GM10248 (cell line): ENCODE measurements at regions of chr16 and their contacts with region 1.

Region 1: DNA sequence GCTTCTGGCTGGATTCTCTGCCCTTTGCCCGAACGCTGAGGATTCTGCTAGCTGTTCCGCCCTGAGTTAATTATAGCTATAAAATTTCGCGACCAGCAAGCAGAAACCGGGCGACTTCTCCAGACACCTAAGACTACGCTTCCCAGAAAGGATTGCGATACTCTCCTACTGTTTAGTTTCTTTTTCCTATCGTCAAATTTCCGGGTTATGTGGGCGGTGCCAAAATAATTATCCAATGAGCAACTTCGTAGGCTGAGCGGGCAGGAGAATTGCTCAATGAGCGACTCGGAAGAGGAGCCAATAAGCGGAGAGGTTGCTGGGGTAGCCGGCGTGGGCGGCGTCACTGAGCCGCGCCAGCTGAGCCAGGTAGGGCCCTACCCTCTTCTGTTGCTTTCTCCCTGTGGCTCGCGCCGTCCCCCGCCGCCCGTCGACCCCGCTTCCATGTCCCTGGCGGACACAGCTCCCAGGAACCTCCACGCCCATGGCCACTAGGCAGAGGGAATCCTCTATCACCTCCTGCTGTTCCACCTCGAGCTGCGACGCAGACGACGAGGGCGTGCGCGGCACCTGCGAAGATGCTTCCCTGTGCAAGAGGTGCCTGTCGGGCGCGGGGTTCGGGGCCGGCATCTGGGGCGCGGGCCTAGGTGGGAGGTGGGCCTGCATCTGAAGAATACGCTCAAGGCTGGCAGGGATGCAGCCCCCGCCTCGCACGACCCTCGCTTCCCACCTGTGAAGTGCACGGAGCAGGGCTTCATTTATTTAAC is at the start of gene LCMT1:
- DNase-seq: peak; percentile 96
- CTCF ChIP-seq: no peak

Region 2: GRCh38 chr16:25006469-25007055 is 105.0 kb before region 1 on chr16:
- CTCF ChIA-PET with region 1: no interaction called
- POLR2A ChIA-PET with region 1: no interaction called
- DNase-seq: no peak
- CTCF ChIP-seq: no peak

Region 3: DNA sequence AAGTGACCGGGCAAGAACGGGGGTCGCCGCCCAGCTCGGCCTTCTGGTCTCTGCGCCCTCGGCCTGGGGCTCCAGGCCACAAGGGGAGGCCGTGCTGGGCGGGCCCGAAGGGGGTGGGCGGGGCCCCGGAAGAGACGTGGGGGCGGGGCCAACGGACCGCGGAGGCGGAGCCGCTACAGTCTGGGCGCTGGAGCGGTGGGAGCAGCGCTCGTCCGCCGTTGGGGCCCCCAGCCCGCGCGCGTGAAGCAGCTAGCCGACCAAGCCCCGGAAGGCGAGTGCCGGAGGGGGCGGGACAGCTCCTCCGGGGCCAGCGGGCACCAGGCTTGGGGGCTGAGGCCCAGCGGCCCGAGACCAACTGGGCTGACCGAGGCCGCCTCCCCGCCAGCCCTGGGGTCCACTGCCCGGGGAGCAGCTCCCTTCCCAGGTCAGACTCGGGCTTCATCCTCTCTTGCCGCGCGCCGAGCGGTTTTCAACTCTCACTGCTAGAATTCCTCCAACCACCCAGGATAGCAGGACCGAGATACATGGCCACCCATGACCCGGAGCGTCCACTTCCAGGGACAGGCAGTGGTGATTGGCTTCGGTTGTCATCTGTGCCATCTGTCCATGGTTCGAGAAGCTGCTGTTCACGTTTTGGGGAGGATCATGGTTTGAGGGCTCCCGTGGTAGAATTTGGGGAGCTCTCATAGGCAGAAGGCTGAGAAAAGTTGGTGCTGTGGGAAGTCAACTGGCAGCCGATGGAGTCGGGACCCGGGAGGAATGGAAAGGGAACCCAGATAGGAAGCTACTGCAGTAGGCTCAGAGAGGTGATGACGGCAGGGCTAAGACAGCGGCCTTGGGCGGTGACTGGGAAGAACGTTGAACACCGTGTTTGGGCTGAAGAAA is 44.6 kb before region 1 on chr16:
- CTCF ChIA-PET with region 1: interaction called, 19 read pairs
- POLR2A ChIA-PET with region 1: no interaction called
- DNase-seq: peak; percentile 96
- CTCF ChIP-seq: no peak

Region 4: GRCh38 chr16:25093208-25094061 is 18.1 kb before region 1 on chr16:
- CTCF ChIA-PET with region 1: interaction called, 10 read pairs
- POLR2A ChIA-PET with region 1: no interaction called
- DNase-seq: peak; percentile 50
- CTCF ChIP-seq: no peak